ENCODE measurements at regions of chr4 and their contacts with region 1.

Region 1: GRCh38 chr4:143773998-143774895 is 73.8 kb upstream of the FREM3 start:
- DNase-seq: peak; percentile 31 to 72
- H3K4me3 ChIP-seq: no peak overlapping the region
- H3K27ac ChIP-seq: no peak overlapping the region
- H3K4me1 ChIP-seq: no peaks in the 10 kb centered on the region
- H3K27me3 ChIP-seq: no peaks in the 10 kb centered on the region
- CTCF ChIP-seq: peak; percentile 57 to 91 (median 81)
- EP300 ChIP-seq: no peak
- POLR2A ChIP-seq: no peak
- RAD21 ChIP-seq: peak; percentile 93 to 94

Region 2: GRCh38 chr4:143513306-143514168 is 260.7 kb before region 1 on chr4 and contains the start of gene SMARCA5:
- CTCF ChIA-PET with region 1: no interaction called
- POLR2A ChIA-PET with region 1: no interaction called
- DNase-seq: peak; percentile 89 to 95
- H3K4me3 ChIP-seq: peak within 1 kb of the TSS; percentile 93 to 98 (median 94)
- H3K27ac ChIP-seq: peak within 1 kb of the TSS; percentile 96
- H3K4me1 ChIP-seq: peaks cover 0 to 3% (median 0%) of the 10 kb centered on the region in 4 experiments; a peak in 2 of 7 replicates
- H3K27me3 ChIP-seq: no peaks in the 10 kb centered on the region
- CTCF ChIP-seq: no peak
- EP300 ChIP-seq: no peak
- POLR2A ChIP-seq: peak; percentile 92 to 95
- RAD21 ChIP-seq: no peak
- total RNA-seq, gene SMARCA5: 107 and 112 TPM in 2 replicates

Region 3: DNA sequence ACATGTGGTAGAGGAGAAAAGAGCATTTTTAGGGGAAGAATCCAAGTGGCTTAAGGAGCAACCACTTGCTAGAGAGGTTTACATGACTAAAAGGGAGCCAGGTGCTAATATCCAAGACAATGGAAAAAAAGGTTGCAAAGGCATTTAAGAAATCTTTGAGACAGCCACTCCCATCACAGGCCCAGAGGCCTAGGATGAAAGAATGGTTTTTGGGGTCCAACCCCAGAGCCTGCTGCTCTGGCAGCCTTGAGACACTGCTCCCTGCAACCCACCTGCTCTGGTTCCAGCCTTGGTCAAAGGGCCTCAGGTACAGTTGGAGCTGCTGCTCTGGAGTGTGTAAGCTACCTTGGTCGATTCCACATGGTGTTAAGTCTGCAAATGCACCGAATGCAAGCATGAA is 10.3 kb after region 1 on chr4:
- CTCF ChIA-PET with region 1: interaction called, 10 read pairs
- POLR2A ChIA-PET with region 1: no interaction called
- DNase-seq: no peak
- H3K4me3 ChIP-seq: no peak overlapping the region
- H3K27ac ChIP-seq: no peak overlapping the region
- H3K4me1 ChIP-seq: no peaks in the 10 kb centered on the region
- H3K27me3 ChIP-seq: no peaks in the 10 kb centered on the region
- CTCF ChIP-seq: no peak
- EP300 ChIP-seq: no peak
- POLR2A ChIP-seq: no peak
- RAD21 ChIP-seq: no peak

Measured in H1 (cell line).